IMR-90 (cell line): ENCODE measurements at regions of chr1 and their contacts with region 1.

Region 1: DNA sequence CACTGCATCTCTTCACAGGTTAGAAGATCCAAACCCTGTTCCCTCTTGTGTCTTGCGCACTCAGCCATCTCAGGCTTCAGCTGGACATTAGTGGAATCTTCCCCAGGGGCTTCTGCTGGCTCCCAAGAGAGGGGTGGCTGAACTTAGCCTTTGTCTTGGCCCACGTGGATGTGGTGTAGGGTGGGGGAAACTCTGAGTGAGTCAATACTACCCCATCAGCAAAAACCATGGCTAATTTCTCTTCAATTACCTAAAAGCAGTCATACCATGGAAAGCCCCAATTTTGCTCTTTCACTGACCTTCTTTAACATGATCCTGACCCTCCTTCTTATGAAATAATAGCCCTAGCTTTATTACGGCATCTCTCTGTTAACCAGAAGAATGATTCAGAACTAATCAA is 72.5 kb upstream of the RAB3GAP2 start:
- DNase-seq: no peak
- ATAC-seq: no peak
- H3K4me3 ChIP-seq: no peak overlapping the region
- H3K27ac ChIP-seq: no peak overlapping the region
- H3K4me1 ChIP-seq: no peaks in the 10 kb centered on the region
- H3K27me3 ChIP-seq: no peaks in the 10 kb centered on the region
- CTCF ChIP-seq: no peak
- POLR2A ChIP-seq: no peak
- RAD21 ChIP-seq: no peak

Region 2: DNA sequence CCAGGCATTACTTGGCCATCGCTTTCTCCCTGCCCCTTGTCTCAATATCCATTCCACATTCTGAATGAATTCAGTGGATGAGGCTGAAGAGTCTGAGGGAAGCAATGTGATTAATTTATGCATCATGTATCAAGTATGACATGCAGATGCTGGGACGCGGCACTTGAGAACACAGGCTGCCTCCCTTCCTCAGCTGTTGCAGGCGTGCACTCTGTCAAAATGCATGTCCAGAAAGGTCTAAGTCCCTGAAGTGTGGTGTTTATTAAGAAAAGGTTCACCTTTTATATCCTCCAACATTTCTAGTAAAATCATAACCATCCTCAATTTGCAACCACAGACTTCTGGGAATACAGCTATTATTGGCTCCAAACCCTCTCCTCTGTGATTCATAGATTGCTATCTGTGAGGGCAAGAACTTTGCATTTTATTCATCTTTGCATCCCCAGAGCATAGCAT is 49.9 kb before region 1 on chr1:
- CTCF ChIA-PET with region 1: no interaction called
- POLR2A ChIA-PET with region 1: no interaction called
- dilution Hi-C with region 1: no loop called
- in situ Hi-C with region 1: no loop called
- intact Hi-C with region 1: loop called (anchors 5 kb)
- DNase-seq: no peak
- ATAC-seq: no peak
- H3K4me3 ChIP-seq: no peak overlapping the region
- H3K27ac ChIP-seq: no peak overlapping the region
- H3K4me1 ChIP-seq: no peaks in the 10 kb centered on the region
- H3K27me3 ChIP-seq: peaks cover 8% of the 10 kb centered on the region; the same call in 1 of the 2 replicates
- CTCF ChIP-seq: no peak
- POLR2A ChIP-seq: no peak
- RAD21 ChIP-seq: no peak

Region 3: DNA sequence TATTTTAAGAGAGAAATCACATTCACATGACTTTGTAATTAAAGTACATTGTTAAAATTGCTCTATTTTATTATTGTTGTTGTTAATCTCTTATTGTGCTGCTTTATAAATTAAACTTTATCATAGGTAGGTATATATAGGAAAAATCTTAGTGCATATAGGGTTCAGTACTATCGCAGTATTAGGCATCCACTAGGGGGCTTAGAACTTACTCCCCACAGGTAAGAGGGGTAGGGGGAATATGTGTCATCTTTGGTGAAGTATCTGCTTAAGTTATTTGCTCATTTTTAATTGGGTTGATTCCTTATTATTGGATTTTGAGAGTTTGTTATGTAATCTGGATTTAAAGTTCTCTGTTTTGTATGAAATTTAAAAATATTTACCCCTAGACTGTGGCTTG is 1011.9 kb after region 1 on chr1:
- CTCF ChIA-PET with region 1: no interaction called
- POLR2A ChIA-PET with region 1: no interaction called
- dilution Hi-C with region 1: no loop called
- in situ Hi-C with region 1: no loop called
- intact Hi-C with region 1: no loop called
- DNase-seq: no peak
- ATAC-seq: no peak
- H3K4me3 ChIP-seq: no peak overlapping the region
- H3K27ac ChIP-seq: no peak overlapping the region
- H3K4me1 ChIP-seq: no peaks in the 10 kb centered on the region
- H3K27me3 ChIP-seq: no peaks in the 10 kb centered on the region
- CTCF ChIP-seq: no peak
- POLR2A ChIP-seq: no peak
- RAD21 ChIP-seq: no peak